Transverse colon (tissue), 4 donors: ENCODE measurements at regions of chr11 and their contacts with region 1.

Region 1: GRCh38 chr11:37050311-37050710 is 452.3 kb upstream of the RAG2 start:
- DNase-seq: no peak
- H3K4me3 ChIP-seq: no peak overlapping the region
- H3K27ac ChIP-seq: no peak overlapping the region
- H3K4me1 ChIP-seq: no peaks in the 10 kb centered on the region
- H3K27me3 ChIP-seq: no peaks in the 10 kb centered on the region
- CTCF ChIP-seq: no peak
- EP300 ChIP-seq: no peak
- POLR2A ChIP-seq: no peak

Region 2: GRCh38 chr11:36009473-36009872 is 1040.8 kb before region 1 on chr11:
- in situ Hi-C with region 1: no loop called
- intact Hi-C with region 1: loop called (anchors 10 kb)
- DNase-seq: no peak
- H3K4me3 ChIP-seq: no peak overlapping the region
- H3K27ac ChIP-seq: peak overlapping the region in 1 of 4 donors; percentile 17
- H3K4me1 ChIP-seq: peaks cover 0 to 13% (median 2%) of the 10 kb centered on the region in 4 donors
- H3K27me3 ChIP-seq: no peaks in the 10 kb centered on the region
- CTCF ChIP-seq: no peak
- EP300 ChIP-seq: no peak
- POLR2A ChIP-seq: no peak

Region 3: GRCh38 chr11:36744375-36745168 is 305.7 kb before region 1 on chr11:
- in situ Hi-C with region 1: no loop called
- intact Hi-C with region 1: no loop called
- DNase-seq: peak; percentile 73
- H3K4me3 ChIP-seq: no peak overlapping the region
- H3K27ac ChIP-seq: no peak overlapping the region
- H3K4me1 ChIP-seq: no peaks in the 10 kb centered on the region
- H3K27me3 ChIP-seq: peaks cover 6% of the 10 kb centered on the region
- CTCF ChIP-seq: peak; percentile 50 to 69 (median 57)
- EP300 ChIP-seq: no peak
- POLR2A ChIP-seq: no peak

Region 4: GRCh38 chr11:36775130-36775529 is 275.2 kb before region 1 on chr11:
- in situ Hi-C with region 1: no loop called
- intact Hi-C with region 1: no loop called
- DNase-seq: no peak
- H3K4me3 ChIP-seq: no peak overlapping the region
- H3K27ac ChIP-seq: no peak overlapping the region
- H3K4me1 ChIP-seq: no peaks in the 10 kb centered on the region
- H3K27me3 ChIP-seq: no peaks in the 10 kb centered on the region
- CTCF ChIP-seq: no peak
- EP300 ChIP-seq: no peak
- POLR2A ChIP-seq: no peak

Region 5: DNA sequence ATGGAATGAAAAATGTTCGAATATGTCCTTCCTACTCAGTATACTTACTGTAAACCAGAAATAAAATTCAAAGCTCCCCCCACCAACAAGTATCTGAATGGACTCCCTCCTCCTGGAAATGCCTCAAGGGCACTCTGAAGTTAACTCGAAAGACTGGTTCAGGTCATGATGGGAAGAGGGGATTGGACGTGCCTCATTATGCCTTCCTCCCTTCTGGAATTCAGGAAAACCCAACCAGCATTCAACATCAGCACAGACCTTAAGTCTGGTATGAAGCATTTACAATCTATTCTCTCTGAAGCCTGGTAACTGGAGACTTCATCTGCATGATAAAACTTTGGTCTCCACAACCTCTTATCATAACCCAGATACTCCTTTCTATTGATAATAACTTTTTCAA is 24.0 kb before region 1 on chr11:
- in situ Hi-C with region 1: no loop called
- intact Hi-C with region 1: no loop called
- DNase-seq: no peak
- H3K4me3 ChIP-seq: no peak overlapping the region
- H3K27ac ChIP-seq: no peak overlapping the region
- H3K4me1 ChIP-seq: no peaks in the 10 kb centered on the region
- H3K27me3 ChIP-seq: no peaks in the 10 kb centered on the region
- CTCF ChIP-seq: no peak
- EP300 ChIP-seq: no peak
- POLR2A ChIP-seq: no peak

Region 6: GRCh38 chr11:37124384-37124783 is 74.1 kb after region 1 on chr11:
- in situ Hi-C with region 1: no loop called
- intact Hi-C with region 1: loop called (anchors 10 kb)
- DNase-seq: no peak
- H3K4me3 ChIP-seq: no peak overlapping the region
- H3K27ac ChIP-seq: no peak overlapping the region
- H3K4me1 ChIP-seq: no peaks in the 10 kb centered on the region
- H3K27me3 ChIP-seq: no peaks in the 10 kb centered on the region
- CTCF ChIP-seq: no peak
- EP300 ChIP-seq: no peak
- POLR2A ChIP-seq: no peak